ENCODE measurements at regions of chr1 and their contacts with region 1.

Region 1: DNA sequence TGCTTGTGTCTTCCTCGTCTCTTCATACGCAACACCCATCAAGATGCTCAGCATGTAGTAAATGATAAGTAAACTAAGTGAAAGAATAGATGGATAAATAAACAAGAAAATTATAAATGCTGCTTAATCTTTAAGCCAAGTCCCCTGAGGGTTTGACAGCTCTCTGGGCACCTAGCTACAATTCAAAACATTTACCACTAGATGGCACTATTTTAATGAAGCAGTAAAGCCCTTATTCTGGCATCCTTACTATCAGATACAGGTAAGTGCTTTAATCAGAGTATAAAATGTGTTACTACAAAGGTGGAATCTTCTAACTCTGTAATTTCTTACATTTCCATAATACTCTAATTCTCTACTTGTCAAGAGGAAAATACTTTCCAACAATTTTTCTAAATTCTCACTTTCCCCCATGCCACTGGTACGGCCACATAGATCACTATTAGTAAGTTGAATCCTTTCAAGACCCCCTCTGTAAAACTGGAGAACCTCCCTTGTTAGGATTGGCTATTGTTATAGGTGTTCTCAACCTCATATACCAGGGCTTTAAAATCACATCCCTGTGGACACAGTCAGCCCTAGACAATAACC is 137.8 kb downstream of the BARHL2 start:
- DNase-seq: no peak
- H3K4me3 Mint-ChIP-seq: no peak overlapping the region
- H3K27ac Mint-ChIP-seq: no peak overlapping the region
- H3K4me1 Mint-ChIP-seq: no peaks in the 10 kb centered on the region
- H3K27me3 Mint-ChIP-seq: no peaks in the 10 kb centered on the region

Region 2: GRCh38 chr1:90561911-90562310 is 17.4 kb before region 1 on chr1:
- CTCF ChIA-PET with region 1: interaction called, 16 read pairs
- POLR2A ChIA-PET with region 1: no interaction called
- intact Hi-C with region 1: no loop called
- DNase-seq: no peak
- H3K4me3 Mint-ChIP-seq: no peak overlapping the region
- H3K27ac Mint-ChIP-seq: no peak overlapping the region
- H3K4me1 Mint-ChIP-seq: no peaks in the 10 kb centered on the region
- H3K27me3 Mint-ChIP-seq: peaks cover 15% of the 10 kb centered on the region

Region 3: DNA sequence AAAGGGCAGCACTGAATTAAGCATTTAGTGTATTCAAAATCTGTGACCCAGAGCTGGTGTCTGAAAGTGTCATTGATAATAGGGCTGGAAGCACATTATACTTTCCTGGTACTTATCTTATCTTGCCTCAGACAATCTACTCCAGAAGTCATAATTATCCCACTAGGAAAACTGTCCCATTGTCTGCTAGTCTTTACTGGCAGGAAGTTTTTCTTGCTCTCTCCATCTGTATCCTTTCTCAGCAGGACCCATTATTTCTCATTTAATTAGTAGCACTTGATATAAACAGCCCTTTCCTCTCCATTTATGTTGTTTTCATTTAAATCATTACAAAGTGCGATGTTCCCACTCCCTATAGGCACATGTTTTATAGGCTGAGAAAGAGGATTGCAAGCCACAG is 174.2 kb after region 1 on chr1:
- CTCF ChIA-PET with region 1: no interaction called
- POLR2A ChIA-PET with region 1: no interaction called
- intact Hi-C with region 1: no loop called
- DNase-seq: no peak
- H3K4me3 Mint-ChIP-seq: no peak overlapping the region
- H3K27ac Mint-ChIP-seq: no peak overlapping the region
- H3K4me1 Mint-ChIP-seq: no peaks in the 10 kb centered on the region
- H3K27me3 Mint-ChIP-seq: peaks cover 16% of the 10 kb centered on the region

Measured in activated CD4-positive, alpha-beta memory T cell treated with anti-CD3 and anti-CD28 coated beads for 36 hours (primary cell).